Lower leg skin (tissue), 4 donors: ENCODE measurements at regions of chr18 and their contacts with region 1.

Region 1: GRCh38 chr18:25764777-25765176 is 325.6 kb downstream of the SS18 start:
- DNase-seq: no peak
- H3K4me3 ChIP-seq: no peak overlapping the region
- CTCF ChIP-seq: no peak
- POLR2A ChIP-seq: no peak

Region 2: GRCh38 chr18:25557011-25557410 is 207.8 kb before region 1 on chr18:
- intact Hi-C with region 1: no loop called
- DNase-seq: no peak
- H3K4me3 ChIP-seq: no peak overlapping the region
- CTCF ChIP-seq: no peak
- POLR2A ChIP-seq: no peak

Region 3: DNA sequence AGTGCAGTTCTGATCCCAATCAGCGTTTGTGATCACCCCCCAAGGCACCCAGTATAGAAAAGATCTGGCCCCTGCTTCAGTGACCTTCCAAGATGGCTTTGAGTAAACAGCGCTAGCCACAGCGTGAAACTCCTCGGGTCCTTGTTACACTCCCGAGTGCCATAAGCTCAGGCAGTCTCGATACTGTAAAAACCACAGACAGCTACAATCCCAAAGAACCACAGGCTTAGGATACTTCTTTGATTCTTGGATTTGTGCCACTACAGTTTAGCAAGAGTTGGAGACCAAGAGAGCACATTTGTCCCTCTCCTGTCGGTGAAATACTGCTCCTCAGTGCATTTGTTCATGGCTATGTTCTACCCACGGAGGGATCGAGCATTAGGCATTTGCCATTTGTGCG is 60.3 kb before region 1 on chr18:
- intact Hi-C with region 1: loop called (anchors 10 kb)
- DNase-seq: no peak
- H3K4me3 ChIP-seq: no peak overlapping the region
- CTCF ChIP-seq: no peak
- POLR2A ChIP-seq: no peak

Region 4: GRCh38 chr18:26103579-26103978 is 338.8 kb after region 1 on chr18:
- intact Hi-C with region 1: no loop called
- DNase-seq: peak in 1 of 2 donors; percentile 18
- H3K4me3 ChIP-seq: no peak overlapping the region
- CTCF ChIP-seq: no peak
- POLR2A ChIP-seq: no peak

Region 5: DNA sequence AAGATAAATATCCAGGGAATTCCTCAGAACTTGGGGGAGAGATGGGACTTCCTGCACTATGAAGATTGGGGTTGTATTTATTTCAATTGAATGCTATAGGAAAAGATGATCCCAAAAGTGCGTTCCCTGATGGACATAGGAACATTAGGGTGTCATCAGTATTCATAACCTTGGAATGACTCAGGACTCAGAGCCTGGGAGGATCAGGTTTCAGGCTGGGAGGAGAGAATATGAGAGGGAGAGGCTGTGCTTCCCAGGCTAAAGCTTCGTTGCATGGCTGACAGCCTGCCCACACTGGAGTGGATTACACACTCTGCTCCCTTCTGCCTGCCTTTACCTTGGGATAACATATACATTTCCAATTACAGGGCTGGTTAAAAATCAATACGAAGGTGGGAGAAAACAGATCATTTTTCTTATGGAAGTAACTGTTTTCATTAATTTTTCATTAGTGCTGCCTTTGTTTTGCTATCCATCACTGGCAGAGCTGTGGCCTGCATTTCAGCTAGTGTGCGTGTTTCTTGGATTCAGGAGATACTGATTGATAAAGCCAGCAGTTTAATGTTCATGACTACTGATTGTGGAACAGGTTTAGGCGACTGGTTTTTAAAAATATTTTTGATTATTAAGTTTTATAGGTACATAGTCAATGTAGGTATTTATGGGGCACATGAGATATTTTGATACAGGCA is 664.9 kb after region 1 on chr18:
- intact Hi-C with region 1: loop called (anchors 5 kb)
- DNase-seq: no peak
- H3K4me3 ChIP-seq: no peak overlapping the region
- CTCF ChIP-seq: no peak
- POLR2A ChIP-seq: no peak